HCT116 (cell line): ENCODE measurements at regions of chr4 and their contacts with region 1.

Region 1: DNA sequence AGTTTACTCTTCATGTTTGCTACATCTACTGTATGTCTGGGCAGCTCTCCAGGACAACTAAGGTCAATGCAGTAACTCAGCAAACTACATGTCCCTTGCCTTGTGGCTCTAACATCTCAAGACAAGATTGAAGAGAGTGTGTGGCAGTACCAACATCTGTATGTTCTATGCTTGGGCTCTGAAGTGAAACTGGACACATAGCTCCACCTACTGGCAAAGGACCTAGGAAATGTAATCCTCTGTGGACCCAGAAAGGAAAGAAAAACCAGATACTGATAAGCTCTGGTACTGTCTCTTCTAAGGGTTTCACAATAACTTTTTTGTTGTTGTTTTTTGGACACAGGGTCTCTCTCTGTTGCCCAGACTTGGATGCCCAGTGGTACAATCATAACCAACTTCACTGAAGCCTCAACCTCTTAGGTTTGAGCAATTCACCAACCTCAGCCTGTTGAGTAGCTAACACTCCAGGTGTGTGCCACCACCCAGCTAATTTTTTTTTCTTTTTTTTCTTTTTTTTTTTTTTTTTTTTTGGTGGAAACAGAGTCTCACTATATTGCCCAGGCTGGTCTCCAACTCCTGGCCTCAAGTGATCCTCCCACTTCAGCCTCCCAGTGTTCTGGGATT is 64.1 kb downstream of the QDPR start:
- DNase-seq: peak; percentile 74
- ATAC-seq: peak; percentile 99
- H3K4me3 ChIP-seq: no peak overlapping the region
- H3K27ac ChIP-seq: no peak overlapping the region
- H3K4me1 ChIP-seq: no peaks in the 10 kb centered on the region
- H3K27me3 ChIP-seq: no peaks in the 10 kb centered on the region; the same call in 1 of the 2 replicates
- CTCF ChIP-seq: peak; percentile 66 to 86 (median 75); a peak in 5 of 6 replicates
- POLR2A ChIP-seq: no peak
- RAD21 ChIP-seq: peak; percentile 90

Region 2: DNA sequence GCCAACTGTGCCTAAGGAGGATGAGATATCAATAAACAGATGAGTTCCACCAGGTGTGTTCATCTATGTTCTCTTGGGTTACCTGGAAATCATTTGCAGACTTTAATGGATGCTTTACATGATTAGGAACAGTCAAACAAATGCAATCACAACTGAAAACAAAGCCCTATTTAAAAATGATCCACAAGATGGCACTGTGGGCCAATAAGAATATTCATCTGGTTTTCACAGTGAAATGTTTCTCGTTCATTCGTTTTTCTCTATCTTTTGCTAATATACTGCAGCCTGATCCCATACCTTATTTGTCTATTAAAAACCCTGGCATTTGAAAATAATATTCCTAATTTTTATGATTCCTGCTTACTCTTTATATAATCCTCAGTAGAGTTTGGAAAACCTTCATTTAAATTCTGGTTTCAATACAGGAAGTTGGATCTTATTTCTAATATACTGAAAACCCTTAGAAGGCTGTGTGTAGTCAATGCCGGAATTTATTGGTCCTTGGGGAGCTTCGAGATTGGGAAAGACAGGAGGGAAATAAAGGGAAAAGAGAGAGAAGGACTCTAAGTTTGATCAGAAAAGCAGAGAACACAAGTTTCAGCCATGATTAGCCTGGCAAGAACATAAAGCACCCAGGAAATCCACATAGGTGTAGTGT is 1157.8 kb before region 1 on chr4:
- CTCF ChIA-PET with region 1: interaction called, 4 read pairs
- POLR2A ChIA-PET with region 1: no interaction called
- RAD21 ChIA-PET with region 1: no interaction called
- intact Hi-C with region 1: loop called (anchors 1 kb)
- DNase-seq: peak; percentile 7
- ATAC-seq: peak; percentile 62; the same call in 1 of the 2 replicates
- H3K4me3 ChIP-seq: no peak overlapping the region
- H3K27ac ChIP-seq: no peak overlapping the region
- H3K4me1 ChIP-seq: no peaks in the 10 kb centered on the region
- H3K27me3 ChIP-seq: peaks cover 17% of the 10 kb centered on the region
- CTCF ChIP-seq: peak; percentile 32 to 70 (median 59); a peak in 4 of 6 replicates
- POLR2A ChIP-seq: no peak
- RAD21 ChIP-seq: peak; percentile 74

Region 3: GRCh38 chr4:16916719-16917337 is 531.0 kb before region 1 on chr4:
- CTCF ChIA-PET with region 1: interaction called, 15 read pairs
- POLR2A ChIA-PET with region 1: no interaction called
- RAD21 ChIA-PET with region 1: interaction called in 1 of 2 experiments, 4 read pairs
- intact Hi-C with region 1: loop called (anchors 1 kb)
- DNase-seq: peak; percentile 70
- ATAC-seq: peak; percentile 96
- H3K4me3 ChIP-seq: no peak overlapping the region
- H3K27ac ChIP-seq: no peak overlapping the region
- H3K4me1 ChIP-seq: no peaks in the 10 kb centered on the region
- H3K27me3 ChIP-seq: no peaks in the 10 kb centered on the region
- CTCF ChIP-seq: peak; percentile 97 to 98 (median 98)
- POLR2A ChIP-seq: no peak
- RAD21 ChIP-seq: peak; percentile 75

Region 4: DNA sequence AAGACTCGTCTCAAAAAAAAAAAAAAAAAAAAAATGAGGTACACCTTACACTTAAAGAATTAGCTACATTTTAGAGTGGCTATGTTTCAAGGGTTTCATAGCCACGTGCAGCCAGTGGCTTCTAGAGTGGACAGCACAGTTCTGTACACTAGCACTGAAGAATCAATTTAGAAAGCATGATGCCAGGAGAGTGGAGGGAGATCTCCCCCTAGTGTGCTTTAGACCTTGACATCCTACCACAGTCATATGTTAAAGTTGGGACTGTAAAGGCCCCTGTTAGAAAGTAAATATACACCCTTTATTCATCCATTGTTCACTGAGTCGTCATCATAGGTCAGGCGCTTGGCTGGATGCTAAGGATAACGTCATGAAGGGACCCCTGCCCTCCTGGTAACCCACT is 115.3 kb before region 1 on chr4:
- CTCF ChIA-PET with region 1: interaction called, 13 read pairs
- POLR2A ChIA-PET with region 1: no interaction called
- RAD21 ChIA-PET with region 1: no interaction called
- intact Hi-C with region 1: no loop called
- DNase-seq: no peak
- ATAC-seq: no peak
- H3K4me3 ChIP-seq: no peak overlapping the region
- H3K27ac ChIP-seq: no peak overlapping the region
- H3K4me1 ChIP-seq: peaks cover 29 to 36% of the 10 kb centered on the region in 2 experiments
- H3K27me3 ChIP-seq: no peaks in the 10 kb centered on the region; the same call in 1 of the 2 replicates
- CTCF ChIP-seq: no peak
- POLR2A ChIP-seq: no peak
- RAD21 ChIP-seq: no peak

Region 5: DNA sequence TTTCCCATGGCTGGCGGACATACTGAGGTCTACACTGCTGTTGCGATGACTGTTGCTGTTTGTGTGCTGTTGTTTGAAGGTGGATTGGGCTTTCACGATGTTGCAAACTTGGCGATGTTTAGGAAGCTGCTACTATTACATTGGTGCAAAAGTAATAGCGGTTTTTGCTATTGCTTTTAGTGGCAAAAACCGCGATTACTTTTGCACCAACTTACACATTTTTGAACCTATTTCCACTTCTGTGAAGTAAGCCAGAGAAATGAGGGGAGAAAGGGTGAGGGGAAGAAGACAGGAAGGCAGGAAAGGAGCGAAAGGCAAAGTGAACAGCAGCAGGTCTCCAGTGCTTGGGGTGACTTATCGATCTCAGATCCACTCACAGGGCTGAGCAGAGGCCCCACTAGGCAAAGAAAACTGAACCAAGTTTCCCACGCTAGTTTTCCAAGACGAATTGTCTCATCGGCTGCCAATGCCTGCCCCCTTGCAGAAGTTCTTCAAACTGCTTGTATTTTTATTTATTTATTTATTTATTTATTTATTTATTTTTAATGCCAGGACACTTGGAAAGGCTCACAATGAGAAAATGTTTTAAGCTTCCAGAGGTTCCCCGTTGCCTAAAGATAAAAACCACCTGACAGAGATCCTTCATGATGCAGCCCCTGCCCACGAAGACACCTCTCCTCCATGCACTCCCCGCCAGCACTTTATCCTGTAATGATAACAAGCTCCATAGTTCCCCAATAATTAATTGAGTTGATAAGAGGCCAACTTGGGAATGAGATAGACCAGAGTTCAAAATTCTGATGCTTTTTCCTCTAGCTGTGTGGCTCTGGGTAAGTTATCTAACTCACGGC is 20.8 kb after region 1 on chr4:
- CTCF ChIA-PET with region 1: interaction called, 15 read pairs
- POLR2A ChIA-PET with region 1: no interaction called
- RAD21 ChIA-PET with region 1: interaction called in 1 of 2 experiments, 3 read pairs
- intact Hi-C with region 1: no loop called
- DNase-seq: peak; percentile 12
- ATAC-seq: no peak
- H3K4me3 ChIP-seq: no peak overlapping the region
- H3K27ac ChIP-seq: no peak overlapping the region
- H3K4me1 ChIP-seq: peaks cover 0 to 3% of the 10 kb centered on the region in 2 experiments; a peak in 2 of 4 replicates
- H3K27me3 ChIP-seq: no peaks in the 10 kb centered on the region
- CTCF ChIP-seq: peak; percentile 25 to 44 (median 29); a peak in 4 of 6 replicates
- POLR2A ChIP-seq: no peak
- RAD21 ChIP-seq: peak; percentile 45